ENCODE measurements at regions of chrX and their contacts with region 1.

Region 1: DNA sequence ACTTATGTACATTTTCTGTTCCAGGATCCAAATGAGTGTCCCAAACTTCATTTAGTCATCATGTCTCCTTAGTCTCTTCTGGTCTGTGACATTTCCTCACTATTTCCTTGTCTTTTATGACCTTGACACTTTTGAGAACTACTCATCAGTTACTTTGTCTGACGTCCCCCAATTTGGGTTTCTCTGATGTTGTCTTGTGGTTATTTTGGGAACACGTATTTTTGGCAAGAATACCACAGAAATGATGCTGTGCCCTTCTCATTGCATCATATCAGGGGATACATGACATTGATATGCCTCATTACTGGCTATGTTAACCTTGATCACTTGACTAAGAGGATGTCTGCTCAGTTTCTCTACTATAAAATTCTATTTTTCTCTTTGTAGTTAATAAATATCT is 308.8 kb downstream of the ZNF674 start:
- DNase-seq: no peak

Region 2: DNA sequence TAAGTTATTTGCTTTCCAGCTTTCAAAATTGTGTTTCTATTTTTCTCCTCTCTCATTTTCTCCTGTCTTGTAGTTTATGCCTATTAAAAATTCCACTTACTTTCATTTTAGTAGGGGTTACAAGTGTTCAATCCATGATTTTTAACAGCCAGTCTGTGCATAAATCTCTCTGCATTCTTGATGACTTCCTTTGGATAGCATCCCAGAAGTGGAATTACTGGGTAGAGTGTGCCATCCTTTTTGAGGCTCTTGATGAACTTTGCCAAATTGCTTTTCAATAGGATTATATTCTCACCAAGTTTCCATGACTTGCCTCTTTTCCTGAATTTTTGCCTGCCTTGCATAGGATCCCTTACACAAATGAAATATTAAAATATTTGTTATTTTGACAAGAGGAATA is 1094.2 kb before region 1 on chrX:
- intact Hi-C with region 1: loop called in 1 of 2 experiments (anchors 10 kb)
- DNase-seq: no peak

Measured in posterior vena cava (tissue), 2 donors.